Natural killer cell (primary cell): ENCODE measurements at regions of chr4 and their contacts with region 1.

Region 1: DNA sequence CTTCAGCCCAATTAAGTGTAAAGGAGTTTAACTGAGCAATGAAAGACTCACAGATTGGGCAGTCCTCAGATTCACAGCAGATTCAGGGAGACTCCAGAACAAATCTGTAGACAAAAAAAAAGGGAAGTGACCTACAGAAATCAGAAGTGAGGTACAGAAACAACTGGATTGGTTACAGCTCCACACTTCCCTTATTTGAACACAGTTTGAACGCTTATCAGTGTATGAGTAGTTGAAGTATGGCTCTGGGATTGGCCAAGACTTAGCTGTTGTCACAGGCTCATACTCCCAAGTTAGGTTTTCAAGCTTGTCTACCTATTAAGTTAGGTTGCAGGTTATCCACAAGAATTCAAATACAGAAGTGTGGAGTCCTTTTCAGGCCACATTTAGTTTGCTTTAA is 112.4 kb upstream of the ELOVL6 start:
- DNase-seq: no peak
- ATAC-seq: no peak
- H3K4me3 ChIP-seq: no peak overlapping the region
- H3K4me3 Mint-ChIP-seq: no peak overlapping the region
- H3K27ac ChIP-seq: no peak overlapping the region
- H3K27ac Mint-ChIP-seq: no peak overlapping the region
- H3K4me1 ChIP-seq: no peaks in the 10 kb centered on the region
- H3K4me1 Mint-ChIP-seq: no peaks in the 10 kb centered on the region
- H3K27me3 ChIP-seq: peaks cover 3% of the 10 kb centered on the region
- H3K27me3 Mint-ChIP-seq: peaks cover 7% of the 10 kb centered on the region in 2 donors
- CTCF ChIP-seq: no peak

Region 2: GRCh38 chr4:110335399-110335798 is 24.6 kb after region 1 on chr4:
- intact Hi-C with region 1: no loop called
- DNase-seq: no peak
- ATAC-seq: no peak
- H3K4me3 ChIP-seq: no peak overlapping the region
- H3K4me3 Mint-ChIP-seq: no peak overlapping the region
- H3K27ac ChIP-seq: no peak overlapping the region
- H3K27ac Mint-ChIP-seq: no peak overlapping the region
- H3K4me1 ChIP-seq: no peaks in the 10 kb centered on the region
- H3K4me1 Mint-ChIP-seq: no peaks in the 10 kb centered on the region
- H3K27me3 ChIP-seq: no peaks in the 10 kb centered on the region
- H3K27me3 Mint-ChIP-seq: peaks cover 20 to 48% of the 10 kb centered on the region in 2 donors
- CTCF ChIP-seq: no peak

Region 3: GRCh38 chr4:110510955-110511544 is 200.3 kb after region 1 on chr4:
- intact Hi-C with region 1: loop called (anchors 2 kb)
- DNase-seq: peak in 1 of 2 donors; percentile 72
- ATAC-seq: peak; percentile 67 to 71 (median 70)
- H3K4me3 ChIP-seq: no peak overlapping the region
- H3K4me3 Mint-ChIP-seq: no peak overlapping the region
- H3K27ac ChIP-seq: no peak overlapping the region
- H3K27ac Mint-ChIP-seq: no peak overlapping the region
- H3K4me1 ChIP-seq: no peaks in the 10 kb centered on the region
- H3K4me1 Mint-ChIP-seq: peaks cover 11 to 12% of the 10 kb centered on the region in 2 donors
- H3K27me3 ChIP-seq: no peaks in the 10 kb centered on the region
- H3K27me3 Mint-ChIP-seq: peaks cover 0 to 4% of the 10 kb centered on the region in 2 donors
- CTCF ChIP-seq: peak; percentile 84